SK-N-SH (cell line): ENCODE measurements at regions of chr1 and their contacts with region 1.

Region 1: DNA sequence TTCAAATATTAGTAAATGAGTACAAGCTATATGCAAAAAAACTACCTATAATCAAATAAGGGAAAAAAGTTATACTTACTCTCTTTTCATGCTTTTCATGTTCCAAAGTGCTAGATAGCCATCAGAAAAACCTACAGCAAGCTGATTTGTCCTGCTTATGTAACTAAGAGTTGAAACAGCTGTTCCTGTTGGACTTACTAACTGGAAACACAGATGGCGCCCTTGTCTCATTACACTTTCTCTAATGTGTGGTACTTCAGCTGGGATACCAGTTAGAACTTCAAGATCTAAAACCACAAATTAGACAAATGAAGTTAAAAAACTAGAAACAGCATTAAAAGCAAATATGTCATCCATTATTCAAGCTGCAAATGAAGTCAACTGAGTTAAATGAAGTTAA is 24.3 kb downstream of the AHCTF1 start:
- DNase-seq: peak; percentile 26
- H3K4me3 ChIP-seq: no peak overlapping the region
- H3K27ac ChIP-seq: no peak overlapping the region; a peak in 1 of 4 replicates
- H3K4me1 ChIP-seq: no peaks in the 10 kb centered on the region; a peak in 1 of 4 replicates
- H3K27me3 ChIP-seq: no peaks in the 10 kb centered on the region
- CTCF ChIP-seq: peak; percentile 65
- EP300 ChIP-seq: no peak
- RAD21 ChIP-seq: peak; percentile 73

Region 2: GRCh38 chr1:246450611-246451251 is 456.7 kb before region 1 on chr1:
- CTCF ChIA-PET with region 1: no interaction called
- POLR2A ChIA-PET with region 1: no interaction called
- DNase-seq: peak; percentile 42
- H3K4me3 ChIP-seq: no peak overlapping the region; a peak in 1 of 4 replicates
- H3K27ac ChIP-seq: no peak overlapping the region
- H3K4me1 ChIP-seq: peaks cover 2 to 13% of the 10 kb centered on the region in 2 experiments; a peak in 2 of 4 replicates
- H3K27me3 ChIP-seq: no peaks in the 10 kb centered on the region
- CTCF ChIP-seq: peak; percentile 86
- EP300 ChIP-seq: no peak
- RAD21 ChIP-seq: peak; percentile 93

Region 3: DNA sequence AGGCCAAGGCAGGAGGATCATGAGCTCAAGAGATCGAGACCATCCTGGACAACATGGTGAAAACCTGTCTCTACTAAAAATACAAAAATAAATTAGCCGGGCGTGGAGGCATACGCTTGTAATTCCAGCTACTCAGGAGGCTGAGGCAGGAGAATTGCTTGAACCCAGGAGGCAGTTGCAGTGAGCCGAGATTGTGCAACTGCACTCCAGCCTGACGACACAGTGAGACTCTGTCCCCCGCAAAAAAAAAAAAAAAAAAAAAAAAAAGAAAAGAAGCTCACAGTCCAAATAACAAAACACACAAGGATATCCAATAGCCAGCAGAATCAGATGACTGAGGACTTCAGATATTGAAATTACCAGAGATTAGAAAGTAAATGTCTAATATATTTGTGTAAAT is 12.4 kb after region 1 on chr1:
- CTCF ChIA-PET with region 1: interaction called, 14 read pairs
- POLR2A ChIA-PET with region 1: no interaction called
- DNase-seq: no peak
- H3K4me3 ChIP-seq: no peak overlapping the region
- H3K27ac ChIP-seq: no peak overlapping the region
- H3K4me1 ChIP-seq: no peaks in the 10 kb centered on the region
- H3K27me3 ChIP-seq: no peaks in the 10 kb centered on the region
- CTCF ChIP-seq: no peak
- EP300 ChIP-seq: no peak
- RAD21 ChIP-seq: no peak

Region 4: DNA sequence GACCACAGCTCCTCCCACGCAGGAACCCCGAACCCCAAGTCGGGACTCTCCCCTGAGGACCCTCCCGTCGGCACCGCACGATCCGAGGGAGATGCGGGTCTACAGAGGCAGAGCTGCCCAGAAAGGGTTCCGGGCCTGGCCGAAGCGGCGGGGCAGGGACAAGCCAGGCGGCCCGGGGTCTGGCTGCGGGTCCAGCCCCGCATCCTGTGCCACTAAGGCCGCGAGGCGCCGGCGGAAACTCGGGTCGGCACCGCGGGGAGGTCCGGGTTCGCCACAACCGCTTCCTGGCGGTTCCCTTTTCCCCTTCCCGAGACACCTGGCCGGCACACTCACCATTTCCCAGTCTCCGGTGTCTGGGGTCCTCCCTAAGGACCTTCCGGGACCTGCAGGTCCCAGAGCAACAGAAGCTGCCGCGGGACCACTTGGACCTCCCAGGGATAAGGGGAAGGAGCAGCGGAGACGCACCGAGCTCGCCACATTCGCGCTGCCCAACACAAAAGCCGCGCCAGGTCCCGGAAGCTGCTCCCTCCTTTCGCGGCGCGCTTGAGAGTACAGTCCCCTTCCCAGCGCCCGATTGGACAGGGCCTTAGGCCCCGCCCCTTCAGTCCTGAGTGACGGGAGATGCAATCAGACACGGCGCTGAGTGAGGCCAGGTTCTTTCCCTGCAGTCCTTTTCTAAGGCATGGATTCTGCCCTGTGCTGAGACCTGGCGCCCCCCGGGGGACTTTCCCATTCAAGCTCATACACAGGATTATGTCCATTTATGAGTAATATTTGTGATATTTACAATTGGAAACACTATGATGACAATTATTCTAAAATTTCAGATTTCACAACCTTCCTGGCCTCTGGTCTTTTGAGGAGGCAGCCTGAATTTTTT is 171.0 kb after region 1 on chr1 and contains the start of gene ZNF670:
- CTCF ChIA-PET with region 1: interaction called, 13 read pairs
- POLR2A ChIA-PET with region 1: interaction called, 3 read pairs
- DNase-seq: peak; percentile 96
- H3K4me3 ChIP-seq: peak within 1 kb of the TSS; percentile 80 to 86
- H3K27ac ChIP-seq: peak within 1 kb of the TSS; percentile 66 to 87
- H3K4me1 ChIP-seq: peaks cover 0 to 2% of the 10 kb centered on the region in 2 experiments; a peak in 2 of 4 replicates
- H3K27me3 ChIP-seq: no peaks in the 10 kb centered on the region
- CTCF ChIP-seq: no peak
- EP300 ChIP-seq: no peak
- RAD21 ChIP-seq: peak; percentile 59
- polyA plus RNA-seq, gene ZNF670: 0.84 and 1.4 TPM in 2 replicates